Sciatic nerve (tissue), 2 donors: ENCODE measurements at regions of chr17 and their contacts with region 1.

Region 1: DNA sequence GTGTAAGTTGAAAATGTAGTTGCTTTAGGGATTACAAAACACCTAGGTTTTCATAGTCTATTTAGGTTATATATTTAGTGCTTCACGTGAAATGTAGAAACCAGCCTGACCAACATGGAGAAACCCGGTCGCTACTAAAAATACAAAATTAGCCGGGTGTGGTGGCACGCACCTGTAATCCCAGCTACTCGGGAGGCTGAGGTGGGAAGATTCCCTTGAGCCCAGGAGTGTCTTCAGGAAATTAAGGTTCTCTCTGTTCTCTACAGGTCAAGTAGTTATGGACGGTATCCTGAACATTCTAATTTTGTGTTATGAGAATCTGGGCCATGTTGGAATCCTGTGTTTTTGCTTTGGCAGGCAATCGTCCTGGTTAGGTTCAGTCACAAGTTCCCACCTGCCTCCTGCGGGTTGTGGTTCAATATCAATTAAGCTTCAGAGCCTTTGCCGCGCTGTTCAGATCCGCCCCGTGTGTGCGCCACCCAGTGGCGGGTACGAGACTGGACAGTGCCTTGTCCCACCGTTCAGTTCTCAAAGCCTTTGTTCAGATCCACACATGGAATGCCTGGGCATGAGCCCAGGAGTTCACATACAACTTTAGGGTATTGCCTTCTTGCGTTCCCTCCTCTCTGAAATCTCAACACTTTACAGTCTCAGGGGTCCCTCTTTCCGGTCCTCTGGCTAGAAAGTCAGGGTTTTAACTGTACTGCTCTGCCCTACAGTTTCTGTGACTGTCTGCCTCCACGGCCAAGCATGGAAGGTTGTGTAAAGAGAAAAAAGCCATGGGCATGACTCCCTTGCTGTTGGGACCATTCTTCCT is 41.7 kb downstream of the HEATR6 start:
- DNase-seq: peak; percentile 77
- ATAC-seq: peak; percentile 89

Region 2: GRCh38 chr17:59914274-59914854 is 122.6 kb before region 1 on chr17:
- intact Hi-C with region 1: loop called (anchors 10 kb)
- DNase-seq: no peak
- ATAC-seq: no peak

Region 3: DNA sequence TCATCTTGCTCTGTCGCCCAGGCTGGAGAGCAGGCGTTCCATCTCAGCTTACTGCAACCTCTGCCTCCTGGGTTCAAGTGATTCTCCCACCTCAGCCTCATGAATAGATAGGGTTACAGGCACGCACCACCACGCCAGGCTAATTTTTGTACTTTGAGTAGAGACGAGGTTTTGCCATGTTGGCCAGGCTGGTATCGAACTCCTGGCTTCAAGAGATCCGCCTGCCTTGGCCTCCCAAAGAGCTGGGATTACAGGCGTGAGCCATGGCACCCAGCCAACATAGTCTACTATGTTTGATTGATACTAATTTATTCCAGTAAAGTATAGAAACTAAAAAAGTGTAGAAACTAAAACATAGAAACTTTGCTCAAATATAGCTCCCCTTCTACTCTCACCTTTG is 207.7 kb after region 1 on chr17:
- intact Hi-C with region 1: no loop called
- DNase-seq: no peak
- ATAC-seq: no peak